T-cell (primary cell): ENCODE measurements at regions of chr16 and their contacts with region 1.

Region 1: DNA sequence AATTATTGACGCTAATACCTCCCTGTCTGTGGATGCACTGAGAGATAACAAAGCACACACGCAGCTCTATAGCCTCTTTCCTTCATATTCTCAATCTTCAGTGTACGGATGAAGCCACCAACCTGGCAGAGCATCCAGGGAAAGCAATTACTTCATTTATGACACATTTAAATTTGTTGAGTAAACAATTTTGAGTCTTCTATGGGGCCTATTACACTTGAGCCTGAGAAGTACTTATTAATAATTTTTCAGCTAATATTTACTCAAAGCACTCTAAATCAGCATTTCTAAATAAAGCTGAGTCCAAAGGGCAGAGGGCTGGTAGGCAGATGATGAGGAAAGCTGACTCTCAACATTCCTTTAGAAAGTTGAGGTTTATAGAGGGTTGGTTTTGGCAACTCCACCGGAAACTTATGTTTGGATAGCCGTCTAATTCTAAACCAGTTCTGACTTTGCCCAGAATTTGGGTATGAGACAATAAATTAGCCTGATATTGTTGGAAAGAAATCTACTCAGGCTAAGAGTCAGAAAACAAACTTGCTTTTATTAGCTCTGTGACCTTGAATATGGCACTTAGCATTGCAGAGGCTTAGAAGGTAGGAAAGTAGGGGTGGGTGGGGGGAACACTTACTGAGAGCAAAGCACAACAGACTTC is 643.5 kb downstream of the CDH11 start:
- DNase-seq: no peak
- ATAC-seq: no peak
- H3K4me3 ChIP-seq: no peak overlapping the region
- H3K4me3 Mint-ChIP-seq: no peak overlapping the region
- H3K27ac ChIP-seq: no peak overlapping the region
- H3K27ac Mint-ChIP-seq: no peak overlapping the region
- H3K4me1 ChIP-seq: no peaks in the 10 kb centered on the region
- H3K4me1 Mint-ChIP-seq: no peaks in the 10 kb centered on the region
- H3K27me3 ChIP-seq: no peaks in the 10 kb centered on the region
- H3K27me3 Mint-ChIP-seq: no peaks in the 10 kb centered on the region

Region 2: DNA sequence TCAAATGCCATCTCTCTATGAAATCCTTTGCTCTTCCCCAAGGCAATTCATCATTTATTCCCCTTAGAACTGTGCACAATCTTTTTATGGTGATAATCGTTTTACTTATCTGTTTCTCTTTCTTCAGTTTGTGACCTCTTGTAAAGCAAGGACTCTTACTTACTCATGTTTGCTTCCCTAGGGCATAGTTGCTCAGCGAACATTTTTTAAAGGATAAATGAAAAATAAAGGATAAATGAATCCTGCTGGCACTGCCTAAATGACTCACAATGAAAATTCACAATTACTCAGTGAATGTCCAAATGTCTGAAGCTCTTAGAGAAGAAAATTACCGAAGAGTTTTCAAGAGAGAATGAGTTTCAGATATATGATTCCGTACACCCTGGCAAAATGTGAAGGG is 28.2 kb before region 1 on chr16:
- CTCF ChIA-PET with region 1: interaction called in 1 of 2 experiments, 14 read pairs
- POLR2A ChIA-PET with region 1: no interaction called
- DNase-seq: no peak
- ATAC-seq: no peak
- H3K4me3 ChIP-seq: no peak overlapping the region
- H3K4me3 Mint-ChIP-seq: no peak overlapping the region
- H3K27ac ChIP-seq: no peak overlapping the region
- H3K27ac Mint-ChIP-seq: no peak overlapping the region
- H3K4me1 ChIP-seq: no peaks in the 10 kb centered on the region
- H3K4me1 Mint-ChIP-seq: no peaks in the 10 kb centered on the region
- H3K27me3 ChIP-seq: no peaks in the 10 kb centered on the region
- H3K27me3 Mint-ChIP-seq: no peaks in the 10 kb centered on the region